Aorta (tissue), 5 donors: ENCODE measurements at regions of chr12 and their contacts with region 1.

Region 1: DNA sequence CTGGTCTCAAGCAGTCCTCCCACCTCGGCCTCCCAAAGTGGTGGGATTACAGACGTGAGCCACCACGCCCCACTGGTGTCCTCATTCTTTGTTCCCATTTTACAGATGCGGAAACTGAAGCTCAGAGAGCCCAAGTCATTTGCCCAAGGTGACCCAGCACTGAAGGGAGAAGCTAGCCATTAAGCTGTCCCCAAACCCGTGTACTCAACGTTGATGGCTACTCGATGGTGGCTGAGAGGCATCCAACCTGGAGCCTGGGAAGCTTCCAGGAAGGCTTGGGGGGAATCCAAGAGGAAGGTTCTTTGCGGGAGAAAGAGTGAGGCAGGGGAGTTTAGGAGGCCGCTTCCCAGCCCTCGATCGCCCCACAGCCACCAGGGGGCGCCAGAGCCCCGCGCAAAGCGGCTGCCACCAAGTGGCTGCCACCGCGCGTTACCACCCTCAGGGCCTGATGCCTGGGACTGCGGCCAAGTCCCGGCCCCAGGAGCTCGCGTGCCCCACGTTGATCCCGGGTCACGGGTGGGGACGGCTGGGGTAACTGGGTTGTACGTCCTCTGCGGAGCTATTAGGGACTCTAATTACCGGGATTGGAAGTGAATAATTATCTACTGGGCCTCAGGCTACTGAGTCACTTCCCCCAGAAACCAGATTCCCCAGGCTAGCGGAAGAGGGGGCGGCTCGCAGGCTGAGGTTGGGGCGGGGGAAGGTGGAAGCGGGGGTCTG is 8.8 kb upstream of the SH2B3 start:
- DNase-seq: peak; percentile 93 to 98
- ATAC-seq: peak; percentile 95
- H3K4me3 ChIP-seq: no peak overlapping the region
- H3K27ac ChIP-seq: no peak overlapping the region
- H3K4me1 ChIP-seq: no peaks in the 10 kb centered on the region
- H3K27me3 ChIP-seq: no peaks in the 10 kb centered on the region

Region 2: GRCh38 chr12:111353603-111354295 is 43.1 kb before region 1 on chr12:
- intact Hi-C with region 1: no loop called
- DNase-seq: no peak
- ATAC-seq: no peak
- H3K4me3 ChIP-seq: no peak overlapping the region
- H3K27ac ChIP-seq: no peak overlapping the region
- H3K4me1 ChIP-seq: no peaks in the 10 kb centered on the region
- H3K27me3 ChIP-seq: no peaks in the 10 kb centered on the region

Region 3: DNA sequence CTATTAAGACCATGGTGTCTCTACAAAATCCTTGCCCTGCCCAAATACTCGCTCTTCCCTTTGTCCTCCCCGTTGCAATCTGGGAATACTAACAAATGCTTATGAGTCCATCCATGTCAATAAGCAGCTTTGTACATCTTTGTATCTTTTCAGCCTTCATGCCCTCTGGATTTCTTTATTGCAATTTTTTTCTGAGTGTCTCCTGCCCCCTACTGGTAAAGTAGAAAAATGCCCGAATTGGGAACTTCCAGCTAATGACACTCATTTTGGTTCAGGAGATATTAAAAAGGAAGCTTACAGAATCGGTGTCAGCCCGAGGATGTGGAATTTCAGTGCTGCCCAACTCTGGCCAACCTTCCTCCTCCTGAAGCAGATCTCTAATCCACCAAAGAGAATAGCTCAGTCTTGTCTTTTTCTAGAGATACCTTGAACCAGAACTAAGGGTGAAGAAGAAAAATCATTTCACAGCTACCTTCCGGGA is 54.8 kb after region 1 on chr12:
- intact Hi-C with region 1: loop called (anchors 2 kb)
- DNase-seq: no peak
- ATAC-seq: peak; percentile 39
- H3K4me3 ChIP-seq: no peak overlapping the region
- H3K27ac ChIP-seq: no peak overlapping the region
- H3K4me1 ChIP-seq: no peaks in the 10 kb centered on the region
- H3K27me3 ChIP-seq: no peaks in the 10 kb centered on the region

Region 4: GRCh38 chr12:111529424-111530368 is 132.8 kb after region 1 on chr12:
- intact Hi-C with region 1: loop called (anchors 2 to 5 kb)
- DNase-seq: peak in 1 of 2 donors; percentile 53
- ATAC-seq: peak; percentile 64
- H3K4me3 ChIP-seq: no peak overlapping the region
- H3K27ac ChIP-seq: no peak overlapping the region
- H3K4me1 ChIP-seq: no peaks in the 10 kb centered on the region
- H3K27me3 ChIP-seq: no peaks in the 10 kb centered on the region

Region 5: DNA sequence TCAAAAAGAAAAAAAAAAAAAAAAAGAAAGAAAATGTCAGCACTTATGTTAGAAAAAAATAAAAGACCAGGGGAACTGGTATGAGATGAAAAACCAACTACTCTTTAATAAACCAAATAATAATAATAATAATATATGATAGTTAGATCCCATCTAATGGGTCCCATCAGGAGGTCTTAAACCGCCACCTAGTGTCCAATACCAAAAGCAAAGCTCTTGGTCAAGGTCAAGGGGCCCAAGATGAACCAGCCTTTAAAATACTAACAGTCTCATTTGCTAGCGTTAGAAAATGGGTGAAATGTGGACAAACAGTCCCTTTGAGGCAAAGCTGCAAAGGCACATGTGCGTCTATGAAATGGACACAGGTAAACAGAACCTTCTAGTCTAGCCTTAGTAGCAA is 276.6 kb after region 1 on chr12:
- intact Hi-C with region 1: loop called in 1 of 2 experiments (anchors 5 kb)
- DNase-seq: no peak
- ATAC-seq: no peak
- H3K4me3 ChIP-seq: no peak overlapping the region
- H3K27ac ChIP-seq: peak overlapping the region in 1 of 2 donors; percentile 40
- H3K4me1 ChIP-seq: no peaks in the 10 kb centered on the region
- H3K27me3 ChIP-seq: no peaks in the 10 kb centered on the region

Region 6: GRCh38 chr12:112906712-112907414 is 1510.0 kb after region 1 on chr12 and contains the start of gene OAS1:
- intact Hi-C with region 1: no loop called
- DNase-seq: no peak
- ATAC-seq: peak; percentile 70
- H3K4me3 ChIP-seq: peak within 1 kb of the TSS in 1 of 2 donors; percentile 49
- H3K27ac ChIP-seq: no peak within 1 kb of the TSS
- H3K4me1 ChIP-seq: peaks cover 3 to 4% of the 10 kb centered on the region in 2 donors
- H3K27me3 ChIP-seq: no peaks in the 10 kb centered on the region
- total RNA-seq, gene OAS1: 20.9 to 25.0 TPM